Transverse colon (tissue), 4 donors: ENCODE measurements at regions of chr10 and their contacts with region 1.

Region 1: GRCh38 chr10:93672022-93672678 is 30.2 kb downstream of the FRA10AC1 start:
- DNase-seq: no peak
- H3K4me3 ChIP-seq: no peak overlapping the region
- H3K27ac ChIP-seq: no peak overlapping the region
- H3K4me1 ChIP-seq: no peaks in the 10 kb centered on the region
- H3K27me3 ChIP-seq: no peaks in the 10 kb centered on the region
- CTCF ChIP-seq: no peak
- EP300 ChIP-seq: no peak
- POLR2A ChIP-seq: no peak

Region 2: GRCh38 chr10:93386631-93387369 is 285.4 kb before region 1 on chr10:
- in situ Hi-C with region 1: no loop called
- intact Hi-C with region 1: no loop called
- DNase-seq: no peak
- H3K4me3 ChIP-seq: peak overlapping the region in 1 of 4 donors; percentile 3
- H3K27ac ChIP-seq: peak overlapping the region; percentile 43 to 53 (median 48)
- H3K4me1 ChIP-seq: peaks cover 0 to 8% (median 0%) of the 10 kb centered on the region in 4 donors
- H3K27me3 ChIP-seq: no peaks in the 10 kb centered on the region
- CTCF ChIP-seq: no peak
- EP300 ChIP-seq: no peak
- POLR2A ChIP-seq: no peak

Region 3: DNA sequence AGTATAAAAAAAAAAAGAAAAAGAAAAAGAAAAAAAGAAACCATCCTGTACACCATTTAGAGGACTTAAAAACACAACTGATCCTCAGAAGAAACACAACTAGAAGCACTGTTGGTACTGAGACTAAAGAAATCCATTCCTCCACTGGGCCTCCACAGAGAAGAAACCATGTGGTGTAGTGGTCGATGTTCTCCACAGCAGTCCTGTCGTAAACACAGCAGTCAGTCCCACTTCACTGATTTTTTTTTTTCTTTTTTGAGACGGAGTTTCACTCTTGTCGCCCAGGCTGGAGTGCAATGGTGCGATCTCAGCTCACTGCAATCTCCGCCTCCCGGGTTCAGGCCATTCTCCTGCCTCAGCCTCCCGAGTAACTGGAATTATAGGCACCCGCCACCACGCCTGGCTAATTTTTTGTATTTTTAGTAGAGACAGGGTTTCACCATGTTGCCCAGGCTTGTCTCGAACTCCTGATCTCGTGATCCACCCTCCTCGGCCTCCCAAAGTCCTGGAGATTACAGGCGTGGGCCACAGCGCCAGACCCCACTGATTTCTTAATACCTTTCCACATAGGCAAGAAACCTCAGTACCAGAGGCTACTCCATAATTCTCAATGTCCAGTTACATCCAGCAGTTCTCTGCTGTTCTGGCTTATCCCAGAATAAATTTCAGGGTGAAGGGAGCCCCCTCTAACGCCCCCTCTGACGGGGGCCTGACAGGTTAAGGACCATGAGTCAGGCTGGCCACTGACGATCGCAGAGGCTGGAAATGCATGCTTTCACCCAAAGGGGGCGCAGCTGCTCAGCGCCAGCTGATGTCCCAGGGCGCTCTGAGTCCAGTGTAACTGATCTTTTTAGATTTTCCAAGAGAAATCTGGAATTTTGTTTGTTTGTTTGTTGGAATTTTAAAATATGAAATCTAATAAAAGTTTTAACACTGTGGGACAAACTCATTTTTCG is 130.5 kb before region 1 on chr10:
- in situ Hi-C with region 1: loop called in 1 of 4 experiments (anchors 10 kb)
- intact Hi-C with region 1: no loop called
- DNase-seq: peak; percentile 66
- H3K4me3 ChIP-seq: peak overlapping the region in 2 of 4 donors; percentile 8 to 36
- H3K27ac ChIP-seq: peak overlapping the region; percentile 8 to 56 (median 42)
- H3K4me1 ChIP-seq: peaks cover 0 to 13% (median 3%) of the 10 kb centered on the region in 4 donors
- H3K27me3 ChIP-seq: no peaks in the 10 kb centered on the region
- CTCF ChIP-seq: peak; percentile 80 to 85 (median 85)
- EP300 ChIP-seq: no peak
- POLR2A ChIP-seq: no peak

Region 4: GRCh38 chr10:93554760-93555432 is 117.3 kb before region 1 on chr10:
- in situ Hi-C with region 1: loop called in 2 of 4 experiments (anchors 10 kb)
- intact Hi-C with region 1: no loop called
- DNase-seq: peak; percentile 83
- H3K4me3 ChIP-seq: no peak overlapping the region
- H3K27ac ChIP-seq: peak overlapping the region in 2 of 4 donors; percentile 5 to 24
- H3K4me1 ChIP-seq: peaks cover 0 to 21% (median 6%) of the 10 kb centered on the region in 4 donors
- H3K27me3 ChIP-seq: no peaks in the 10 kb centered on the region
- CTCF ChIP-seq: peak; percentile 52 to 75 (median 66)
- EP300 ChIP-seq: no peak
- POLR2A ChIP-seq: no peak

Region 5: GRCh38 chr10:93591065-93591808 is 80.9 kb before region 1 on chr10:
- in situ Hi-C with region 1: no loop called
- intact Hi-C with region 1: no loop called
- DNase-seq: peak; percentile 62
- H3K4me3 ChIP-seq: no peak overlapping the region
- H3K27ac ChIP-seq: peak overlapping the region; percentile 23 to 61 (median 50)
- H3K4me1 ChIP-seq: peaks cover 0 to 16% (median 9%) of the 10 kb centered on the region in 4 donors
- H3K27me3 ChIP-seq: no peaks in the 10 kb centered on the region
- CTCF ChIP-seq: no peak
- EP300 ChIP-seq: no peak
- POLR2A ChIP-seq: no peak